ENCODE measurements at regions of chr2 and their contacts with region 1.

Region 1: DNA sequence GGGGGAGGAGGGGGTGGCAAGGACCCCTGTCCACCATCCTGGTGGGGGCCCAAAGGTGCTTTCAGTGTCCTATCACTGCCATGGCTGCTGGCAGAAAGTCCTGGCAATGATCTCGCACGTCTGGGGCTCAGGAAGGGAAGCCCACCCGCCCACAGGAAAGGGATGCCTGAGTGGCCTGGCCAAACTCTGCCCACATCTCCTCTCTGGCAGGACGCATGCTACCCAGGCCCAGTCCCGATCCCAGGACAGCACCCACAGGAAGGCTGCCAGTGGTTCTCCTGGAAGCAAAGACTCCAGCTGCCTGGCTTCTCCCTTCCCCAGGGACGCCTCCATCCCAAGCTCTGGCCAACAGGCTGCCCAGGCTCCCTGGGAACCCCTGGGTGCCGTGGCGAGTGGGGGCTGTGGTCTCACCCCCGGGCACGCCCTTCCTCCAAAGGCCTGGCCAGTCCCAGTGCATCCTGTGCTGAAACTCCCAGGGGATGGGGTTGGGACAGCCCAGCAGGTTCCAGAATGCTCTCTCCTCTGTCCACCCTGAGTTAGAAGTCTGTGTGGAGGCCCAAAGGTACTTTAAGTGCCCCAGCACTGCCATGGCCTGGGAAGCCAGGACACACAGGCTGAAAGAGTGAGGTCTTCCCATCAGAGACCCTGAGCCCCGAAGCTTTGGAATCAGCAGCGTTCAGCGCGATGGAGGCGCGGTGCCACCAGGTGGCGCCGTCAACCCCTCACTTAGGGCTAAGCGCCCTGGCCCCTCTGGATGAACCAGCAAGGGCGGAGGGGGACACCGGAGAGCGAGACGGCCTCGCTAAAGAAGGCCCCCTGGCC is 29.8 kb upstream of the TAF1B start:
- DNase-seq: peak; percentile 77
- ATAC-seq: peak; percentile 93
- H3K4me3 Mint-ChIP-seq: no peak overlapping the region
- H3K27ac Mint-ChIP-seq: no peak overlapping the region
- H3K4me1 Mint-ChIP-seq: peaks cover 15% of the 10 kb centered on the region
- H3K27me3 Mint-ChIP-seq: peaks cover 19% of the 10 kb centered on the region

Region 2: DNA sequence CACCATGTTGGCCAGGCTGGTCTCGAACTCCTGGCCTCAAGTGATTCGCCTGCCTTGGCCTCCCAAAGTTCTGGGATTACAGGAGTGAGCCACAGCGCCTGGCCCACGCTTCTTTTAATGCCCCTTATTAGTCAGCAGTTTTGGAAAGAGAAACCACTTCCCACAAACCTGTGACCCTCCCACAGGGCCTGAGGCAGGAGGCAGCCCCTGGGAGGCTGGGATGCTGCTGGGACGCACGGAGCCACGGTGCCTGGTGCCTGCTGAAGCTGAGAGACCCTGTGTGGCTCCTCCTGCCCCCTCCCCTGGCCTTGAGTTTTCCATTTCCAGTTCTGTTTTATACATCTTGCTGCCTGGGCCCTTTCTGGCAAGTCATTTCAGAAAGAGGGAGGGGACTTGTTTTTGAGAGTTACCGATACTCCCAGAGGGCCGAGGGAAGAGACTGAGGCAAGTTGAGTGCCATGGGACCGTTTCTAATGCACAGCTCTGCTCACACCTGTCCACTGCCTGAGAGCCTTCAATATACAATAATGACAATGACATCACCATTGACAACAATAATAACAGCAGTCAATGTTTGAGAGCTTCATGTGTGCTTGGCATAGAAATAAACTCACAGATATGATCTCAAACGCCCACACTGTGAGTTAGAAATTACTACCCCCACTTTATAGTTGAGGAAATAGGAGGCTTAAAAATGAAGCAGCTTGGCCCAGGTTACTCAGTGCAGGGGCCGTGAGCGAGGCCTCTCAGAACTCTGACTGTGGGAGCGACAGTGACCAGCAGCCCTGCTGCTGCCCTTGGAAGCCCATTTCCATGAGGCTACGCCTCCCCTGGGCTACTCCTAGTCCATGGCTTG is 104.6 kb before region 1 on chr2:
- CTCF ChIA-PET with region 1: no interaction called
- POLR2A ChIA-PET with region 1: no interaction called
- DNase-seq: no peak
- ATAC-seq: no peak
- H3K4me3 Mint-ChIP-seq: no peak overlapping the region
- H3K27ac Mint-ChIP-seq: no peak overlapping the region
- H3K4me1 Mint-ChIP-seq: peaks cover 23% of the 10 kb centered on the region
- H3K27me3 Mint-ChIP-seq: no peaks in the 10 kb centered on the region

Region 3: DNA sequence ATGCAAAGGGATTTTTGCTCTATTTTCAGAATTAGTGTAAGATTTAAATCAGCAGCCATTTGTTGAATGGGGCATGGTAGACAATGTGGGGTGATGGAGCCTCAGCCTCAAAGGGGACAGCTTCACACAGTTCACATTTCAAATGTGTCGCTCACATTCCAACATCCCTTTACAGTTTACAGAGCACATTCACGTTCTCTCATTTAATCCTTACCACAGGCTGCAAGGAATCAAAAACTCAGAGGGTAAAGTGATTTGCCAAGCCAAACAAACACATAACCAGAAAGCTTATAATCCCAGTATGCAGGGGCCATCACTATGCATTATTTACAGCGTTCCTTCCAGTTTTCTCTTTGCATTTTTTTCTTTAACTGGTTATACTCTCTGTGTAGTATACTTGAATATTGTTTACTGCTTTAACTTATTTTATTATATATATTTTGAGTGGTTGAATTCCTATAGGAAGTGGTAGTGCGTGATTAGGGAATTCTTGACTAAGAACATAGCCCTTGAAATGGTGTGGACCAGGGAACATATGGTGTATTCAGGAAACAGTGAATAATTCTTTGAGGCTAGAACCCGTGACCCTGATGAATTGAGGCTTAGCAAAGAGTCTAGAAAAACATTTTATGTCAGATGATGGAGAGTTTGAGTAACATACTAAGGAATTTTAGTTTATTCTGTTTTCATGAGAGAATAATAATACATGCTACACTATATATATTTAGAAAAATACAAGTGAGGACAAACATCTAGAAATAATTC is 11.6 kb after region 1 on chr2:
- CTCF ChIA-PET with region 1: interaction called, 10 read pairs
- POLR2A ChIA-PET with region 1: no interaction called
- DNase-seq: no peak
- ATAC-seq: no peak
- H3K4me3 Mint-ChIP-seq: no peak overlapping the region
- H3K27ac Mint-ChIP-seq: no peak overlapping the region
- H3K4me1 Mint-ChIP-seq: no peaks in the 10 kb centered on the region
- H3K27me3 Mint-ChIP-seq: peaks cover 26% of the 10 kb centered on the region

Region 4: GRCh38 chr2:9885036-9885684 is 71.6 kb after region 1 on chr2:
- CTCF ChIA-PET with region 1: interaction called, 12 read pairs
- POLR2A ChIA-PET with region 1: no interaction called
- DNase-seq: no peak
- ATAC-seq: no peak
- H3K4me3 Mint-ChIP-seq: no peak overlapping the region
- H3K27ac Mint-ChIP-seq: no peak overlapping the region
- H3K4me1 Mint-ChIP-seq: peaks cover 12% of the 10 kb centered on the region
- H3K27me3 Mint-ChIP-seq: no peaks in the 10 kb centered on the region

Region 5: DNA sequence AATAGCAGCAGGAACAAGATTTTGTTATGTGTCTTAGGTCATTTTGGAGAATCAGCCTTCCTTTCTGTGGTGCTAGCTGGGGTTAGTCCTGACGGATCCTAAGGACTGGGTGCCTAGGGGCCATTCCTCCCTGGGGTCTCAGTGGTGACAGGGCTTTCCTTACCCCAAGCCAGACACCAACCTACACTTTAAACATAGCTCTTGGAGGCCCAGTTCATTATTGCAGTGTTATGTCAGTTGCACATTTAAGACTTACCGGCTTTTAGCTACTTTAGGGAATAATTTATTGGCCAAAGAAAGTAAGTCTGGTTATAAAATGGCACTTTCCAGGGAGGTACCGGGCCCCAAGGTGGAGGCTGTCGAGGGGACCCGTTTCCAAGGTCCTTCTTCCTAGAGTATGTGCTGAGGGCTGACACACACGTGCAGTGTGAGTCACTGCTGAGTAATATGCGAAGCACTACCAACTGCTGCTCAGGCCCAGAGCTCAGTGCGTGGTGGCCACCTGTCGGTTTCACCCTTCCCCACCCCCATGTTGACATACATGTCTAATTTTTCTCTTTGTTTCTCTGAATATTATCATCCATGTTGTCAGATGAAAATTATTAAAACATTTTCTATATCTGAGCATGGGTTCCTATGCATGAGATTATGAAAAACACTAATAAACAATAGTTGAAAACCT is 101.0 kb after region 1 on chr2:
- CTCF ChIA-PET with region 1: interaction called, 10 read pairs
- POLR2A ChIA-PET with region 1: no interaction called
- DNase-seq: peak; percentile 28
- ATAC-seq: peak; percentile 73
- H3K4me3 Mint-ChIP-seq: no peak overlapping the region
- H3K27ac Mint-ChIP-seq: no peak overlapping the region
- H3K4me1 Mint-ChIP-seq: no peaks in the 10 kb centered on the region
- H3K27me3 Mint-ChIP-seq: no peaks in the 10 kb centered on the region

Region 6: DNA sequence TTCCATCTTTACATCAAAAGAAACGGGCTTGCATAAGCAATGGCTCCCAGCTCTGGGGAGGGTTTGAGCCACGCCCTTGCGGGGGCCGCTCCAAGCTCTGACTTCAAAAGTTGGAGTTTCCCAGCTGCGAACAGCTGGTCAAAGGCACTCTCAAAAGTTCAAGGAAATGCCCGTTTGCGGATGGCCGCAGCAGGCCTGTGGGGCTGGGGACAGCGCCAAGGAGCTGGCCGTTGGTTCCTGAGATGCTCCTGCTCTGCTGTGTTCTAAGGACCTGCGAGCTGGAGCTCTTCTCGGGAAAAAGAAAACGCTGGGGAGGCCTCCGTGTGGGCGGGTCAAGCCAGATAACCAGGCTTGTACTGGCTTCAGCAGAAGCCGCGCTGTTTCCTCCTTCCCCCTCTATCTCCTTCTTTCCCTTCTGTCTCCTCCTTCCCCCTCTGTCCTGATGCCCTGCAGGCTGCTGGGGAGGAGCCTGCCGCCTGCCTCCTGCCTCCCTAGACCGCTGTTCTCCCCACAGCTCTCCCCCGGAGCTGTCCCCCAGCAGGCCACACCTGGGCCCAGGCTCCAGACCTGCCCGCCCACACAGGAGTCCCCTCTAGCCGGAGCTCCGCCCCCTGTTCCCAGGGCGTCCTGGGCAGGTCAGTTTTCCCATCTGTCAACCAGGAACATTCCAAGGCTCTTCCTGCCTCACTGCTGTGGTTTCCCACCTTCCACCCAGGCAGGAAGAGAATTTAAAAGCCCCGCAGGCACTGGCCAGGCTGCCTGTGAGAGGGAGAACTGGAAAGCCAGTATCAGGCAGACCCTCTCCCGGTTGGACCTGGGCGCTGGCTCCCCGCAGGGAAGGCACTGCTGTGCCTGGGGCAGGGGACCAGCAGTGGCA is 243.9 kb after region 1 on chr2:
- CTCF ChIA-PET with region 1: interaction called, 11 read pairs
- POLR2A ChIA-PET with region 1: no interaction called
- DNase-seq: no peak
- ATAC-seq: no peak
- H3K4me3 Mint-ChIP-seq: no peak overlapping the region
- H3K27ac Mint-ChIP-seq: no peak overlapping the region
- H3K4me1 Mint-ChIP-seq: peaks cover 4% of the 10 kb centered on the region
- H3K27me3 Mint-ChIP-seq: peaks cover 3% of the 10 kb centered on the region